ENCODE measurements at regions of chr11 and their contacts with region 1.

Region 1: GRCh38 chr11:65900125-65900898 is at the start of gene FOSL1:
- DNase-seq: peak; percentile 89
- H3K4me3 ChIP-seq: peak within 1 kb of the TSS; percentile 96
- H3K27ac ChIP-seq: peak within 1 kb of the TSS; percentile 97
- H3K27me3 ChIP-seq: no peaks in the 10 kb centered on the region
- CTCF ChIP-seq: no peak
- polyA plus RNA-seq, gene FOSL1: 7.9 and 16.1 TPM in 2 replicates

Region 2: GRCh38 chr11:65911682-65912568 is 11.6 kb after region 1 on chr11:
- CTCF ChIA-PET with region 1: interaction called, 4 read pairs
- POLR2A ChIA-PET with region 1: interaction called, 98 read pairs
- DNase-seq: no peak
- H3K4me3 ChIP-seq: no peak overlapping the region
- H3K27ac ChIP-seq: peak overlapping the region; percentile 91
- H3K27me3 ChIP-seq: no peaks in the 10 kb centered on the region
- CTCF ChIP-seq: peak; percentile 17; the same call in 1 of the 2 replicates

Region 3: GRCh38 chr11:65918211-65919145 is 18.2 kb after region 1 on chr11 and contains the start of gene C11orf68:
- CTCF ChIA-PET with region 1: interaction called, 4 read pairs
- POLR2A ChIA-PET with region 1: interaction called, 98 read pairs
- DNase-seq: no peak
- H3K4me3 ChIP-seq: peak within 1 kb of the TSS; percentile 94
- H3K27ac ChIP-seq: peak within 1 kb of the TSS; percentile 93
- H3K27me3 ChIP-seq: no peaks in the 10 kb centered on the region
- CTCF ChIP-seq: no peak
- polyA plus RNA-seq, gene C11orf68: 32.9 and 52.2 TPM in 2 replicates

Region 4: GRCh38 chr11:65953513-65953912 is 53.2 kb after region 1 on chr11:
- CTCF ChIA-PET with region 1: no interaction called
- POLR2A ChIA-PET with region 1: no interaction called
- DNase-seq: no peak
- H3K4me3 ChIP-seq: no peak overlapping the region
- H3K27ac ChIP-seq: no peak overlapping the region
- H3K27me3 ChIP-seq: no peaks in the 10 kb centered on the region
- CTCF ChIP-seq: no peak